Common myeloid progenitor, CD34-positive (primary cell): ENCODE measurements at regions of chr14 and their contacts with region 1.

Region 1: DNA sequence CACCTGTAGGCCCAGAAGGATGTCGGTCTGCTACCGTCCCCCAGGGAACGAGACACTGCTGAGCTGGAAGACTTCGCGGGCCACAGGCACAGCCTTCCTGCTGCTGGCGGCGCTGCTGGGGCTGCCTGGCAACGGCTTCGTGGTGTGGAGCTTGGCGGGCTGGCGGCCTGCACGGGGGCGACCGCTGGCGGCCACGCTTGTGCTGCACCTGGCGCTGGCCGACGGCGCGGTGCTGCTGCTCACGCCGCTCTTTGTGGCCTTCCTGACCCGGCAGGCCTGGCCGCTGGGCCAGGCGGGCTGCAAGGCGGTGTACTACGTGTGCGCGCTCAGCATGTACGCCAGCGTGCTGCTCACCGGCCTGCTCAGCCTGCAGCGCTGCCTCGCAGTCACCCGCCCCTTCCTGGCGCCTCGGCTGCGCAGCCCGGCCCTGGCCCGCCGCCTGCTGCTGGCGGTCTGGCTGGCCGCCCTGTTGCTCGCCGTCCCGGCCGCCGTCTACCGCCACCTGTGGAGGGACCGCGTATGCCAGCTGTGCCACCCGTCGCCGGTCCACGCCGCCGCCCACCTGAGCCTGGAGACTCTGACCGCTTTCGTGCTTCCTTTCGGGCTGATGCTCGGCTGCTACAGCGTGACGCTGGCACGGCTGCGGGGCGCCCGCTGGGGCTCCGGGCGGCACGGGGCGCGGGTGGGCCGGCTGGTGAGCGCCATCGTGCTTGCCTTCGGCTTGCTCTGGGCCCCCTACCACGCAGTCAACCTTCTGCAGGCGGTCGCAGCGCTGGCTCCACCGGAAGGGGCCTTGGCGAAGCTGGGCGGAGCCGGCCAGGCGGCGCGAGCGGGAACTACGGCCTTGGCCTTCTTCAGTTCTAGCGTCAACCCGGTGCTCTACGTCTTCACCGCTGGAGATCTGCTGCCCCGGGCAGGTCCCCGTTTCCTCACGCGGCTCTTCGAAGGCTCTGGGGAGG is at the start of gene LTB4R:
- DNase-seq: peak; percentile 85 to 94 (median 88)
- H3K4me3 ChIP-seq: peak within 1 kb of the TSS in 6 of 7 experiments; percentile 17 to 68 (median 42)
- H3K27ac ChIP-seq: peak within 1 kb of the TSS in 1 of 2 experiments; percentile 50
- H3K4me1 ChIP-seq: peaks cover 19 to 79% (median 69%) of the 10 kb centered on the region in 4 experiments
- H3K27me3 ChIP-seq: no peaks in the 10 kb centered on the region

Region 2: GRCh38 chr14:24232121-24232644 is 78.7 kb before region 1 on chr14 and contains the start of gene NEDD8:
- CTCF ChIA-PET with region 1: interaction called, 29 read pairs
- POLR2A ChIA-PET with region 1: no interaction called
- DNase-seq: peak; percentile 90 to 96 (median 95)
- H3K4me3 ChIP-seq: peak within 1 kb of the TSS; percentile 55 to 96 (median 90)
- H3K27ac ChIP-seq: peak within 1 kb of the TSS; percentile 61 to 87
- H3K4me1 ChIP-seq: peaks cover 11 to 37% (median 29%) of the 10 kb centered on the region in 4 experiments
- H3K27me3 ChIP-seq: no peaks in the 10 kb centered on the region

Region 3: GRCh38 chr14:24251880-24252288 is 59.0 kb before region 1 on chr14:
- CTCF ChIA-PET with region 1: interaction called, 11 read pairs
- POLR2A ChIA-PET with region 1: no interaction called
- DNase-seq: no peak
- H3K4me3 ChIP-seq: no peak overlapping the region
- H3K27ac ChIP-seq: no peak overlapping the region
- H3K4me1 ChIP-seq: no peaks in the 10 kb centered on the region
- H3K27me3 ChIP-seq: no peaks in the 10 kb centered on the region

Region 4: DNA sequence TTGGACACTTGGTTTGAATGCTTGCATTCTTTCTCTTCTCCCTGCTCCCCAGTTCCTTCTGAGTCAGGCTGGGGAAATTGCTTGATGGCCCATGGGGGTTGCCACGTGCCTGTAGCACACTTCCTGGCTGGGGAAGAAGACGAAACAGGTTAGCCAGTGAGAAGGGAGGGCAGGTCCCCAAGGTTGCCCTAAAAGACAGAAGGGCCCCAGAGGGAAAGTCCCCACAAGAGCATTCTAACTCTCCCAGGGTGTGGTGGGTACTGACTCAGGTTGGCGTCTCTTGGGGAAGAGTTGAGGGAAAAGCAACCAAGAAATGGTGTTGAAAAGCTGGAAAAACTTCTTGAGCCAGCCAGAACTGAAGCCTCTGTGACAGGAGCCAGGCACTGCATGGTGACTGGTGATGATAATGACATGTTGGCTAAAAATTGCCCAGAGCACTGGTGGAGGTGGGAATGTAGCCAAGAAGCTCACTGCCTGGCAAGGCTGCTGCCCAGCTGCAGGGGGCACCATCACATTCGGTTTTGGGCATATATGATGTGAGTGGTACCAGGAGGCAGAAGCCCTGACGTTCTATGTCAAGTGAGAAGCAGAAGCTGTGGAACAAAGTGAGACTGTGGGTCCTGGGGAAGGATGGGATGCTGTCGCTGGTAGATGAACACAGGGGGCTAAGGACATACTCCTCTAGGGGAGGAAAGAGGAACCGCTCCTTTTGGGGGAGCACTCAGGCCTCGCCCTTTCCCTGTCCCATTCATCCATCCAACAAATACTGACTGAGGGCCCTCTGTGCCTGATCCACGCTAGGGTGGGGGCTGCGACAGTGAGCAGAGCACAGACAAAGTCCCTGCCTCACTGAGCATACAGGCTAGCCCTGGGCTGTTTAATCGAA is 31.4 kb before region 1 on chr14:
- CTCF ChIA-PET with region 1: interaction called, 119 read pairs
- POLR2A ChIA-PET with region 1: no interaction called
- DNase-seq: peak; percentile 79 to 89 (median 88)
- H3K4me3 ChIP-seq: peak overlapping the region in 1 of 7 experiments; percentile 1
- H3K27ac ChIP-seq: no peak overlapping the region
- H3K4me1 ChIP-seq: peaks cover 19 to 62% (median 38%) of the 10 kb centered on the region in 4 experiments
- H3K27me3 ChIP-seq: no peaks in the 10 kb centered on the region

Region 5: DNA sequence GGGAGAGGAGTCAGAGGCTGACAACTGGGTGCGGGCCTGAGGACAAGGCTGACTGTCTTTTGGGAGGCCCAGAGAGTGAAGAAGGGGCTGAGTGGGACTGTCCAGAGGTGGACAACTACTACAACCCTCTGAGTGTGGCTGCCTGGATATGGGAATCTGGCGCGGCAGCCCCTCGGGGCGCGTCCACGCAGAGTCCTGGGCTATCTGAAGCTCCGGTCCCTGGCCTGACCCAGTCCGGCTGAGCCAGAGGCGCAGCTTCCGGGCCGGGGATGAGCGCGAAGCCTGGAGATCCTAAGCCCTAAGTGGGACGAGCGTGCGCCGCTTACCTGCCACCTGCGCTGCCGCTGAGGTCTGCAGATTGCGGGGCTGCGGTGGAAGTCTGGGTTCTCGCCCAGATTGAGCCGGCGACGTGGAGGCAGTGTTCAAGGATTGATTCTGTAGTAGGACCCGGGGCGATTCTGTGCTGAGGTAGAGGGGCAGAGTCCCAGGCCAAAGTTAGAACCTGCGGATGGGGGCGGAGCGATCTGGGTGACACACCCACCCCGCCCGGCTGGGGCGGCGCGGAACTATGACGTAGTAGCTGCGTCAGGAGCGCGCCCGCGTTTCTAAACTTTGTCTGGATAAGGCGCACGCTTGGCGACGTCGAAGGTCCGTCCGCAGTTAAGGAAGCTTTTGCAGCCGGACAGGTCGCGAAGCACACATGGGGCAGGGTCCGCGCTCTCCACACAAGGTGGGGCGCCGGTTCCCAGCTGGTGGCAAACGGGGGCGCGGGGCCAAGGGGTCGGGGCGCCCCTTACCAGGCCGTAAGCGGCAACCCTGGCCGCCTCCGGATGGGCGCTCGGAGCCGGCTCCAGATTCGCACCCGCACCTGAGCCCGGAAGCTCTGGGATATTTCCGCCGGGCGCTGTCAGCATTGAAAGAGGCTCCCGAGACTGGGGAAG is 11.4 kb before region 1 on chr14 and contains the starts of genes DHRS1 and NOP9:
- CTCF ChIA-PET with region 1: interaction called, 133 read pairs
- POLR2A ChIA-PET with region 1: interaction called, 3 read pairs
- DNase-seq: peak; percentile 89 to 92 (median 91)
- H3K4me3 ChIP-seq: peak within 1 kb of the TSS; percentile 85 to 98 (median 92)
- H3K27ac ChIP-seq: peak within 1 kb of the TSS; percentile 75 to 83
- H3K4me1 ChIP-seq: peaks cover 7 to 36% (median 28%) of the 10 kb centered on the region in 4 experiments
- H3K27me3 ChIP-seq: no peaks in the 10 kb centered on the region

Region 6: DNA sequence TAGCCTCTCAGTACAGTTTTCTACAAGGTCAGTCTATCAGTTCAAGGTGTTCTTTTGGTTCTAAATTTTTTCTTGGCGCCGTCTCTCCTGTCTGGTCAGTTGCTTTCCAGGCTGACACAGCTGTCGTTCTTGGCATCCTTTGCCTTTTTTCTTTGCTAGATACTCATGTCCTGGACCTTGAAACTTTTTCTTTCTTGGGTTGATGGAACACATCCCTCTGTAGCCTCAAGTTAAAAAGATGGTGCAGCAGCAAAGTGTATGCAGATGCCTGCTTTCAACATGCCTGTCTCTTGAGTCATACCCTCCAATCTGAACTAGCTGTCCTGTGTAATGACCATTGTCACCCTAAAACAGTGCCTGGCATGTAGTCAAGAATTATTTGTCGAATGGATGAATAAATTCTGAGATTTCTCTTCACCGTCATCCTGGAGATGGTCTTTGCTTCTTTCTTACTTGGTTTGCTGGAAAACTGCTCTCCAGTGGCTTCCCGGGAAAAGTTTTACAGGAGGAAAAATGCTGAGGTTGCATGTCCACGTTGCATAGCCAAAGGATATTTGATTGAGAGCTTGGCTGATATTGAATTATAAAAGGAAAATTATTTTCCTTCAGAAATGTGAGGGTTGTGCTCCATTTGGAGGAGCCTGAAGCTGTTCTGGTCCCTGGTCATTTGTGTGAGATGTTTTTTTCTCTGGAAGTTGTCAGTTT is 92.5 kb after region 1 on chr14:
- CTCF ChIA-PET with region 1: no interaction called
- POLR2A ChIA-PET with region 1: no interaction called
- DNase-seq: no peak
- H3K4me3 ChIP-seq: no peak overlapping the region
- H3K27ac ChIP-seq: no peak overlapping the region
- H3K4me1 ChIP-seq: peaks cover 0 to 29% (median 19%) of the 10 kb centered on the region in 4 experiments
- H3K27me3 ChIP-seq: no peaks in the 10 kb centered on the region

Region 7: DNA sequence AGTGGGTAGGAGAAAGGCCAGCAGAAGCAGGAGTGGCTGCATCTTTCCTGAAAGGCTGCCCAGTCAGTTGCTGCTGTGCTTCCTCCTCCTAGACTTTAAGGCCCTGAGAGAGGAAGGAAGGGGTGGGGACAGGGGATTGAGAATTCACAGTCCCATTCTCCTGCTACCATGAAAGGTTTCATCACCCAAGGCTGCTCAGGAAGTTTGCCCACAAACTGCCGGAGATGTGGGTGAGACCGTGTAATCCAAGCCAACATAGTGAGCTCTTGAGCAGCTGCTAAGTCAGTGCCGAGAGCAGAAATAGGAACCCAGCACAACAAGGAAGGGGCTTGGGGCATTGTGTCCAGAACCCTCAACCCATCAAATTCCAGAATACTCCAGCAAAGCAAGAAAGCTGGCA is 265.3 kb after region 1 on chr14 and contains the start of gene CTSG:
- CTCF ChIA-PET with region 1: no interaction called
- POLR2A ChIA-PET with region 1: no interaction called
- DNase-seq: peak; percentile 6 to 72 (median 67)
- H3K4me3 ChIP-seq: peak within 1 kb of the TSS in 1 of 7 experiments; percentile 11
- H3K27ac ChIP-seq: peak within 1 kb of the TSS in 1 of 2 experiments; percentile 9
- H3K4me1 ChIP-seq: peaks cover 0 to 30% (median 6%) of the 10 kb centered on the region in 4 experiments
- H3K27me3 ChIP-seq: no peaks in the 10 kb centered on the region